WTC11 (cell line): ENCODE measurements at regions of chr16 and their contacts with region 1.

Region 1: DNA sequence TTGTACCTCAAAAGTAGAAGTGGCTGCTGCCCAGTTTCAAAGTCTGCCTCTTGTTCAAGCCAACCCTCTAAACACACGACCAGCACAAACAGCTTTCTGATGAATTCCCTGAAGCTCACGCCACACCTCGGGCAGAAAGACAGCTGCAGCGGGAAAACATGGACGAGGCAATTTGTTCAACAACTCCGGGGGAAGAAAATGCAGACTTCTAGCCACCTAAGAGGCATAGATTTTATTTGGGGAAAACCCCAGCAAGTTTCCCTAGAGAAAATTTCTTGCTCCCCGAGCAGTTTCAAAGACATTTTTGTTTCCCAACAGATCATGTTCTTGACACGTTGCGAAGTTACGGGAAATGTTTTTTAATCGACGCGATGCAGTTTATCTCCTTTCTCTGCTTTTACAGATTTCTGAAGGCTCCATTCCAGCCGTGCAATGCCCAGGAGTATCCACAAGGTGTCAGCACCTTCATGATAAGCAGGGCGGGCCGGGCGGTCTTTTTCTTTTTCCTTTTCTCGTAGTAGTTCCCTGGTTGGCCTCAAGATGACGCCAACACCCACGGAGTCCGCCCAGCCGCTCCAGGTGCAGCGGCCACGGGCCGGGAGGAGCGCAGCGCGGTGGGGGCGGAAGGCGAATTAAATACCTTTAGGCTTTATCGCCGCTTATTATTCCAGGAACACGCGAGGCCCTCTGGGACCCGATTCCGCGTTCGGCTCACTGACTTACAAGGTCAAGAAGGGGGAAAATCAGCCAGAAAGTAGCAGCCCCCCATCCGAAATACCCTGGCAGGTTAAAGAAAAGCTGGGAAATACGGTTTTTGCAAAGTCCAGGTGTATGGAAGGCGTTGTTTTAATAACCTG is 2.9 kb upstream of the FOXC2 start:
- DNase-seq: peak; percentile 93
- ATAC-seq: peak; percentile 27
- H3K4me3 Mint-ChIP-seq: peak overlapping the region; percentile 62
- H3K27ac Mint-ChIP-seq: no peak overlapping the region
- H3K4me1 Mint-ChIP-seq: peaks cover 20% of the 10 kb centered on the region
- H3K27me3 Mint-ChIP-seq: peaks cover 66% of the 10 kb centered on the region
- CTCF ChIP-seq: peak; percentile 98

Region 2: DNA sequence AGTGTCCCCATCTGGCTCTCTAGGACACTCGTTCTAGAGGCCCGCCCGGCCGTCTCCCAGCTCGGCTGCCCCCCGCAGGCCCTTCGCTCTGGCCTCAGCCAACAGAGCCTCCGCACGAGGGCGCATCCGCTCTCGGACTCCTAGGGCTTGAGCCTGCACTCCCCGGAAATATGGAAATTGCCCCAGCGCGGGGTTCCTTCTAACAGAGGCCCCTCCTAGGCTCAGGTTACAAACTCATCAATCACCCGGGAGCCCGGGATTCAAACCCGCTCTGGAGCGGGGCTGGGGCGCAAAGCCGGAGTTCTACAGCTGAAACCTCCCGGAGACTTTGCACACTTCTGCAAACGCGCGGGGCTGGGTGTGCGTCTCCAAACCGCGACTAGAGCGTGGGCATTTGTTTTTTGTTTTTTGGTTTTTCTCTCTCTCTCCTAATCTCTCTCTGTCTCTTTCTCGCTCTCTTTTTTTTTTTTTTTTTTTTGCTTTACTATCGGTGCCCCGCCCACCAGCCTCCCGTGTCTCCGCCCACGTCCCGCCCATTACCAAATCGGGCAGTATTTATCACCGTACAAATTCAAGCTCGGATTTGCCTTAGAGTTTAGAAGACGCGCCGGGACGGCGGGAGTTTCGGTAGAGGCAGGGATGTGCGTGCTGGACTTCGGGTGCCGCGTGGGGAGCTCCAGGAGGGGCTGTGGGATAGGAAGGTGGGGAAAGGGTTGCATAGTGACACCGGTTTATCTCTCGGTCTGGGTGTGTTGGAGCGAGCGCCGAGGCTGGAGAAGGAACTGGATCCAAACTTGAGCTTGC is 12.2 kb after region 1 on chr16:
- CTCF ChIA-PET with region 1: interaction called, 15 read pairs
- POLR2A ChIA-PET with region 1: no interaction called
- DNase-seq: peak; percentile 92
- ATAC-seq: peak; percentile 74
- H3K4me3 Mint-ChIP-seq: peak overlapping the region; percentile 89
- H3K27ac Mint-ChIP-seq: no peak overlapping the region
- H3K4me1 Mint-ChIP-seq: peaks cover 68% of the 10 kb centered on the region
- H3K27me3 Mint-ChIP-seq: peaks cover 98% of the 10 kb centered on the region
- CTCF ChIP-seq: no peak

Region 3: GRCh38 chr16:86680162-86680561 is 116.4 kb after region 1 on chr16:
- CTCF ChIA-PET with region 1: no interaction called
- POLR2A ChIA-PET with region 1: no interaction called
- DNase-seq: no peak
- ATAC-seq: no peak
- H3K4me3 Mint-ChIP-seq: no peak overlapping the region
- H3K27ac Mint-ChIP-seq: no peak overlapping the region
- H3K4me1 Mint-ChIP-seq: no peaks in the 10 kb centered on the region
- H3K27me3 Mint-ChIP-seq: peaks cover 3% of the 10 kb centered on the region; the same call in 1 of the 2 replicates
- CTCF ChIP-seq: no peak